ENCODE measurements at regions of chrX and their contacts with region 1.

Region 1: GRCh38 chrX:68828740-68829552 is at the start of gene EFNB1:
- DNase-seq: peak; percentile 95
- H3K4me3 ChIP-seq: peak within 1 kb of the TSS; percentile 40 to 82 (median 62)
- H3K27ac ChIP-seq: peak within 1 kb of the TSS in 7 of 8 donors; percentile 64 to 85 (median 81)
- H3K4me1 ChIP-seq: peaks cover 0 to 54% (median 12%) of the 10 kb centered on the region in 6 donors
- H3K27me3 ChIP-seq: peaks cover 0 to 25% (median 5%) of the 10 kb centered on the region in 7 donors
- CTCF ChIP-seq: peak in 1 of 11 experiments; percentile 6
- POLR2A ChIP-seq: peak in 1 of 3 donors; percentile 96
- total RNA-seq, gene EFNB1: 22.0 to 48.7 (median 38.5) TPM

Region 2: DNA sequence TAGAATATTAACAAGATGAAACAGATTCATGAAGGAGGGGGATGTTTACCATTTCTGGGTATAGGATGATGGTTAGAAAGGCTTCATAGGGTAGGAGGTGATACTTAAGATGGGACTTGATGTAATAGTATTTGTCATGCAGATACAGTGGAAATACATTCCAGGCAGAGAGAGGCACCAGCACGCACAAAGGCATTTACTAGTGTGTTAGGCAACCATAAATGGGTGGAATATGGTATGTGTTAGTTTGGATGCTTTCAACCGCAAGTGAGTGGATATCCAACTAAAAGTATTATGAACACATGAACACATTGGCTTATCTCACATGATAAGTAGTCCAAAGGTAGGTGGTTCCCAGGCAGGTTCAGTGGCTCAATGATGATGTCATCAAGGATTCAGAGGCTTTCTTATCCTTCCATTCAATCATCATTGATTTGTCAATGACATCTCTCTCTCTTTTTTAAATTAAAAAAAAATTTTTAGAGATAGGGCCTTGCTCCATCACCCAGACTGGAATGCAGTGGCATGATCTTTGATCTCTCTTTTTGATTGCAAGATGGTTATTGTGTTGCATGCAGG is 194.2 kb before region 1 on chrX:
- intact Hi-C with region 1: no loop called
- DNase-seq: no peak
- H3K4me3 ChIP-seq: no peak overlapping the region
- H3K27ac ChIP-seq: no peak overlapping the region
- H3K4me1 ChIP-seq: no peaks in the 10 kb centered on the region
- H3K27me3 ChIP-seq: no peaks in the 10 kb centered on the region
- CTCF ChIP-seq: no peak
- POLR2A ChIP-seq: no peak

Region 3: DNA sequence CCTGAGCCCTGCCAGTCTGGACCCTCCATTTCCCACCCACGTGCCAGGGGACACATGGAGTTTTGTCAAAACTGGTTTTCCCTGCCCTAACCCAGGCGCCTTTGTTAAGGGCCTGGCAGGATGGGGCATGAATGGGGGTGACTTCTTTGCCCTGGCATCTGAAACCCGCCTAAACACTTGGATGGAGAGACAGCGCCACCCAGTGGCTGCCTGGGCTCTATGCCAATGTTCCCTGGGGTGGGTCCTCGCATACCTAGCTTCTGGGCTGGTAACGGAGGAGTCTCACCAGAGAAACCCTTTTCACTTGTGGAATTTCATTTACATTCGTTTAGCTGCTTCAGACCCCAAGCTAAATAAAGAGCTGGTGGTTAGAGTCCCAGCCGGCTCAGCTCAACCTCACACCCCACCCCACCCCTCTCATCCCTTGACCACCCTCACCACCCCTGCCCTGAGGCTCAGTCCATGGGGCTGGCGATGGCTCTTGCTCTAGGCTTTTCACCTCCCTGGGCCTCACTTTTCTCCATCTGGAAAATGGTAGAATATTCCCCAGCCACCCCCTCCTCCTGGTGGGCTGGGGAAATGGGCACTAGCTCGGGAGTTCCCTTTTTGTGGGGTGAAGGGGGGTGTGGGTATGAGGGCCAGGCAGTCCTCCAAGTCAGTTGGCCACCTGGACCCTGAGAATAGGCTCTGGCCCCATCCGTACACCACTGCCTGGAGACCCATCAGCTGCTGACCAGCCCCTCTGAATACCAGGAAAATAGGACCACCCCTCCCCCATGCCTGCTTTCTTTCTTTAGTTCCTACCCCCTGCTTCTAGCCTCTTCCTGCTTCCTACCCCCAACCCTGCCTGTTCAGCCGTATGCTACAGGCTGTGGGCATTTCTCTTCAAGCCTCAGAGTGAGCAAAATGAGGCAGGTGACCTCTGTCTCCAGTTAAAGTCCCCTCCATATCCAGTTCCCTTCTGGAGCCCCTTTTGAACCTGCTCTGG is 393.5 kb after region 1 on chrX:
- intact Hi-C with region 1: loop called (anchors 5 kb)
- DNase-seq: peak; percentile 85
- H3K4me3 ChIP-seq: no peak overlapping the region
- H3K27ac ChIP-seq: no peak overlapping the region
- H3K4me1 ChIP-seq: peaks cover 0 to 6% (median 0%) of the 10 kb centered on the region in 6 donors
- H3K27me3 ChIP-seq: peaks cover 0 to 28% (median 4%) of the 10 kb centered on the region in 7 donors
- CTCF ChIP-seq: peak; percentile 49 to 79 (median 73)
- POLR2A ChIP-seq: no peak

Measured in spleen (tissue), 13 donors.